Activated CD8-positive, alpha-beta T cell treated with anti-CD3 and anti-CD28 coated beads, Interleukin-2, amount 10 ng/mL, durations not matched to agents 7 days and 5 days (primary cell): ENCODE measurements at regions of chr3 and their contacts with region 1.

Region 1: DNA sequence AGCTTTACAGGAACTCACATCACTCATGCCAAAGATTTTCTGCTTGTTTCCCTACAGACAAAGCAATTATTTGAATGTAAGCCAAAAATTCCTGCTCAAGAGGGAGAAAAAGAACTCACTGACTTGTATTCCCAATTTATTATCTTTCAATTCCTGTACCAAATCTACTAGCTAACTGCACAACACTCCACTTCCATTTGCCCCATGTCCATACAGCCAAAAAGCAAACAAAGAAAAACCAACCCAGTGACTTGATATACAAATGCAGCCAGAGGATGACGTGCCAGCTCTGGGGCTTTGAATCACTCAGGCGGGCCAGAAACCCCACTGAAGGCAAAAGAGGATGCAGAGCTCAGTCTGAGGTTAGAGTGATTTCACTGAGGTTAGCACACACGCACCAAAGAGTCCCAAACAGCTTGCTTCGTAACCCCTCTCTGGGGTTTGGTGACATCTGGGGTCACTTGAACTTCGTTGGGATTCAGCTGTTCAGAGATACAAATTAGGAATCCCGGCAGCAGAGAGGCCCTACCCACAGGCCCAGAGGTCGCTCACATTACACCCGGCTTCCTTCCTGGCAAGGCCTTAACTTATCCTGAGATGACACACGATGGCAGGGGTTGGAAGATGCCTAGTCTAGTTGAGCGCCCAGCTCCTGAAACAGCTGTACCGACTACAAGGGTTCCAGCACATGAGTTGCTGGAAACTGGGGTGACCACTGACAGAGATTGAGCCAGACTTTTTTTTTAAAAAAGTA is 1.6 kb downstream of the RFTN1 start:
- DNase-seq: peak; percentile 91
- ATAC-seq: peak; percentile 69
- H3K4me3 Mint-ChIP-seq: peak overlapping the region; percentile 94
- H3K27ac Mint-ChIP-seq: peak overlapping the region; percentile 85
- H3K4me1 Mint-ChIP-seq: peaks cover 84% of the 10 kb centered on the region
- H3K27me3 Mint-ChIP-seq: no peaks in the 10 kb centered on the region

Region 2: GRCh38 chr3:16378920-16379319 is 132.9 kb before region 1 on chr3:
- CTCF ChIA-PET with region 1: interaction called, 10 read pairs
- POLR2A ChIA-PET with region 1: interaction called, 12 read pairs
- DNase-seq: no peak
- ATAC-seq: peak; percentile 7
- H3K4me3 Mint-ChIP-seq: no peak overlapping the region
- H3K27ac Mint-ChIP-seq: peak overlapping the region; percentile 39
- H3K4me1 Mint-ChIP-seq: peaks cover 80% of the 10 kb centered on the region
- H3K27me3 Mint-ChIP-seq: no peaks in the 10 kb centered on the region

Region 3: DNA sequence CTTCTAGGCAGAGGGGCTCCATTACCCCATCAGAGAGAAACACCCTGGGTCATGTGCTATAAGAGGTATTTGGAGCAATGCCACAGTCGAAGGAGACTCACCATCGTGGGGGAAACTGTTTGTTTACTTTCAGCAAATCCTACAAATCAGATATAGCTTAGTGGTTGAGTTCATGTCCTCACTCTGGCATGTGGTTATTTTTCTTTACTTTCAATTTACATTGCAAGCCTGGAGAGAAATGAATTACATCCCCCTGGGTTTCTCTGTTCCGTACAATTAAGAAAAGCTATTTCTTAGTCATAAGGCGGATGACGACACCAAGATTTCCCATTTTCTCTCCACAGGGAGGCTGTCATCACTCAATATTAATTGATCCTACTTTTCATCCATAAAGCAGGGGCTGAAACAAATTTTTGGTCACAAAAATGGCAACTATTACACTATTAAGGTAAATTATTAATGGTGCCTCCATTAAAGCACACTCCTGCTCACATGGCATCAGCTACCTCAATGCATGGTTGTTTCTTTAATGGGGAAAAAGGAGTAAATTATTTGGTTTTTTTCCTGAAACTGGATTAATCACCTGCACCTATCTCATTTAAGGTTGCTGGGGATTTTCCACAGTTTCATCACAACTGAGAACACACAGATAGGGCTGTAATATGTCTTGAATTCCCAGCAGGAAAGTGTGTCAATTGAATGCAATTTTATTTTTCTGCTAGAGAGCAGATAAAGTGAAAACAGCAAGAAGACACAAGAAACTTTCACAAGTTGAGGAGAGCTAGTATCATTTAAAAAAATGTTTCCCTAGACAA is 35.0 kb before region 1 on chr3:
- CTCF ChIA-PET with region 1: interaction called, 10 read pairs
- POLR2A ChIA-PET with region 1: interaction called, 23 read pairs
- DNase-seq: no peak
- ATAC-seq: peak; percentile 56
- H3K4me3 Mint-ChIP-seq: no peak overlapping the region
- H3K27ac Mint-ChIP-seq: peak overlapping the region; percentile 65
- H3K4me1 Mint-ChIP-seq: peaks cover 57% of the 10 kb centered on the region
- H3K27me3 Mint-ChIP-seq: no peaks in the 10 kb centered on the region

Region 4: GRCh38 chr3:16482770-16483531 is 28.9 kb before region 1 on chr3:
- CTCF ChIA-PET with region 1: interaction called, 18 read pairs
- POLR2A ChIA-PET with region 1: interaction called, 23 read pairs
- DNase-seq: peak; percentile 71
- ATAC-seq: peak; percentile 89
- H3K4me3 Mint-ChIP-seq: peak overlapping the region; percentile 40
- H3K27ac Mint-ChIP-seq: peak overlapping the region; percentile 83
- H3K4me1 Mint-ChIP-seq: peaks cover 73% of the 10 kb centered on the region
- H3K27me3 Mint-ChIP-seq: no peaks in the 10 kb centered on the region

Region 5: GRCh38 chr3:16496408-16497222 is 15.2 kb before region 1 on chr3:
- CTCF ChIA-PET with region 1: interaction called, 26 read pairs
- POLR2A ChIA-PET with region 1: interaction called, 10 read pairs
- DNase-seq: no peak
- ATAC-seq: peak; percentile 47
- H3K4me3 Mint-ChIP-seq: no peak overlapping the region
- H3K27ac Mint-ChIP-seq: peak overlapping the region; percentile 53
- H3K4me1 Mint-ChIP-seq: peaks cover 65% of the 10 kb centered on the region
- H3K27me3 Mint-ChIP-seq: no peaks in the 10 kb centered on the region

Region 6: GRCh38 chr3:16583551-16583950 is 71.7 kb after region 1 on chr3:
- CTCF ChIA-PET with region 1: no interaction called
- POLR2A ChIA-PET with region 1: no interaction called
- DNase-seq: no peak
- ATAC-seq: no peak
- H3K4me3 Mint-ChIP-seq: no peak overlapping the region
- H3K27ac Mint-ChIP-seq: no peak overlapping the region
- H3K4me1 Mint-ChIP-seq: no peaks in the 10 kb centered on the region
- H3K27me3 Mint-ChIP-seq: peaks cover 13% of the 10 kb centered on the region